Calu3 (cell line): ENCODE measurements at regions of chr3 and their contacts with region 1.

Region 1: GRCh38 chr3:99633887-99634558 is 4.4 kb upstream of the COL8A1 start:
- DNase-seq: no peak
- H3K4me3 Mint-ChIP-seq: no peak overlapping the region
- H3K27ac Mint-ChIP-seq: no peak overlapping the region
- H3K4me1 Mint-ChIP-seq: peaks cover 63% of the 10 kb centered on the region
- H3K27me3 Mint-ChIP-seq: no peaks in the 10 kb centered on the region
- CTCF ChIP-seq: no peak

Region 2: DNA sequence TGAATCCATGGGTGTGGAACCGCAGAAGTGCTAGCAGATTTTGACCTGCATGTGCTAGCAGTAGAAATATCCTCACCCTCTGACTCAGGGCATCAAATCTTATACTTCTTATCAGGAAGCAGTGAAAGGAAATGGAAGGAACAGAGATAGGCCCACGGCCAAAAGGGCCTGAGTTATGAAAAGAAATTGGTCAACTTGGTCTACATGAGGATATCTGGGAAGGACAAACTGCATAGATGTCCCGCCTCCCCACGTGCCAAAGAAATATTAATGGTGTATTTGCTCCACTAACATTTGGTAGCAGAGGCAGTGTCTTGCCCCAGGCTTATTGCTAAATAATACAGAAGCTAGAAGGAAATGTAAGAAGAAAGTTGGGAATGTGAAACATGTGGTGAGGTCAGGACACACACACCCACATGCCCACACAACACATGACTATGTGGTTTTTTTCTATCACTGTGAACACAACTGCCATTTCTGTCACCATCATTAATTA is 89.2 kb before region 1 on chr3:
- CTCF ChIA-PET with region 1: no interaction called
- intact Hi-C with region 1: loop called (anchors 5 kb)
- DNase-seq: peak; percentile 25
- H3K4me3 Mint-ChIP-seq: no peak overlapping the region
- H3K27ac Mint-ChIP-seq: peak overlapping the region; percentile 81
- H3K4me1 Mint-ChIP-seq: peaks cover 61% of the 10 kb centered on the region
- H3K27me3 Mint-ChIP-seq: no peaks in the 10 kb centered on the region
- CTCF ChIP-seq: no peak

Region 3: DNA sequence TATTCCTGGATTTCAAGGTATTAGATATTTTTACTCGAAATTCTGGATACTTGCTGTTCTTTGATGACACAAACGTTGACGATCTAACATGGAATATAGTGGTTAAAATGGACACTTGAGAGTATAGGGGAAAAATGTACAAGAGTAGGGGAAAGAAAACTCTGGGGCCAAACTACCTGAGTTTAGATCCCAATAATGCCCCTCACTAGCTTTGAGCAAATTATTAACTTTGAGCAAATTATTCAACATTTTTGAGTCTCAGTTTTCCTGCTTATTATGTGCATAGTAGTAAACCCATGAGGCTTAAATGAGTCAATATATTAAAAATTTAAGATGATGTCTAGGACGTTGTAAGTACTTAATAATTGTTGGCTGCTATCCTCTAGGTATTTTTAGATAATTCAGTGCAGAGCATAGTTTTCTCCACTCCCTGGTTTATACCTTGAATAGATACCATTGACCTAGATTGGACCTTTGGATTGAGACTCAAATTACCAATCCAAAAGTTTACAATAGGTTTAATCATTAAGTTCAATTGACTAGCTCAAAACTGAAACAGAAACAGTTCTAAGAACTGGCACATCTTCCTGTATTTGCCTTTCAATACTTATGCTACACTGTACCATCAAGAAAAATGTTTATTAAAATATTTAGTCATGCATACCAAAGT is 979.8 kb after region 1 on chr3:
- CTCF ChIA-PET with region 1: no interaction called
- intact Hi-C with region 1: no loop called
- DNase-seq: no peak
- H3K4me3 Mint-ChIP-seq: no peak overlapping the region
- H3K27ac Mint-ChIP-seq: peak overlapping the region; percentile 88
- H3K4me1 Mint-ChIP-seq: peaks cover 32% of the 10 kb centered on the region
- H3K27me3 Mint-ChIP-seq: no peaks in the 10 kb centered on the region
- CTCF ChIP-seq: no peak